IMR-90 (cell line): ENCODE measurements at regions of chr7 and their contacts with region 1.

Region 1: GRCh38 chr7:82017334-82017943 is 247.6 kb upstream of the HGF start:
- DNase-seq: peak; percentile 65
- ATAC-seq: peak; percentile 71
- H3K4me3 ChIP-seq: no peak overlapping the region
- H3K27ac ChIP-seq: no peak overlapping the region
- H3K4me1 ChIP-seq: peaks cover 4% of the 10 kb centered on the region
- H3K27me3 ChIP-seq: no peaks in the 10 kb centered on the region
- CTCF ChIP-seq: peak; percentile 75
- POLR2A ChIP-seq: no peak
- RAD21 ChIP-seq: peak; percentile 82

Region 2: GRCh38 chr7:81715984-81716588 is 301.4 kb before region 1 on chr7:
- CTCF ChIA-PET with region 1: no interaction called
- POLR2A ChIA-PET with region 1: no interaction called
- dilution Hi-C with region 1: no loop called
- in situ Hi-C with region 1: no loop called
- intact Hi-C with region 1: loop called (anchors 5 kb)
- DNase-seq: peak; percentile 53
- ATAC-seq: peak; percentile 54
- H3K4me3 ChIP-seq: no peak overlapping the region
- H3K27ac ChIP-seq: no peak overlapping the region
- H3K4me1 ChIP-seq: no peaks in the 10 kb centered on the region
- H3K27me3 ChIP-seq: no peaks in the 10 kb centered on the region
- CTCF ChIP-seq: peak; percentile 48
- POLR2A ChIP-seq: no peak
- RAD21 ChIP-seq: peak; percentile 69

Region 3: GRCh38 chr7:81990395-81990794 is 27.0 kb before region 1 on chr7:
- CTCF ChIA-PET with region 1: no interaction called
- POLR2A ChIA-PET with region 1: no interaction called
- dilution Hi-C with region 1: no loop called
- in situ Hi-C with region 1: no loop called
- intact Hi-C with region 1: no loop called
- DNase-seq: peak; percentile 83
- ATAC-seq: no peak
- H3K4me3 ChIP-seq: no peak overlapping the region
- H3K27ac ChIP-seq: no peak overlapping the region
- H3K4me1 ChIP-seq: no peaks in the 10 kb centered on the region
- H3K27me3 ChIP-seq: no peaks in the 10 kb centered on the region
- CTCF ChIP-seq: no peak
- POLR2A ChIP-seq: no peak
- RAD21 ChIP-seq: no peak